ENCODE measurements at regions of chrX and their contacts with region 1.

Region 1: DNA sequence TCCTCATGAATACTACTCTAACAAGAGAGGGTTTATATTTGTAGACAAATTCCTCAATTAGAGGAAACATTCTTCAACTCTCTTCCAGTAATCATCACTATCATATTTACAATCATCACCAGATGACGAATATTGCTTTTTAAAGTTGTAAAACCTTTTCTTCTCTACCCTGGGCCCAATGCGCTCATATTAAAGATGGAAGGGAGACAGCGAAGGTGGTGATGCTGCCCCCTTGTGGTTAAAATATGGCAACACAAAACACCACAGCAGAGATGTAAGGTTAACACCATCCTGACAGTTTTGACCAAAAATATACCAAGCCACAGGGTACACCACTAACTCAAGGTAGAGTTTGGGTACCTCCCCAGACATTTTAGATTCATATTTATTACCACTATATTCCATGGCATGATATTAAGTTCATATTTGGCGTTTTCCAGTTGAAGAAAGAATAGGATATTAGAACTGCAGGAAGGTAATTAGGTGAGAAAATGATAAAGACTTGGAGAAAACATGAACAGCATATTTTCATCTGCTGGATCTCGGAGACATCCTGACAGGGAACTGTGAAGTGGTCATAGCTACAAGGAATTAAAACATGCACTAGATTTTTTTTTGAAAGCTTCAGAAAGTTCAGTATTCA is 72.8 kb downstream of the SLC9A7 start:
- DNase-seq: peak; percentile 34 to 36
- H3K4me3 ChIP-seq: no peak overlapping the region
- H3K4me3 Mint-ChIP-seq: no peak overlapping the region
- H3K27ac Mint-ChIP-seq: no peak overlapping the region
- H3K4me1 ChIP-seq: no peaks in the 10 kb centered on the region
- H3K4me1 Mint-ChIP-seq: no peaks in the 10 kb centered on the region
- H3K27me3 ChIP-seq: no peaks in the 10 kb centered on the region
- H3K27me3 Mint-ChIP-seq: no peaks in the 10 kb centered on the region
- CTCF ChIP-seq: peak; percentile 41 to 44

Region 2: GRCh38 chrX:46739736-46740135 is 53.6 kb after region 1 on chrX:
- CTCF ChIA-PET with region 1: no interaction called
- POLR2A ChIA-PET with region 1: no interaction called
- intact Hi-C with region 1: loop called (anchors 10 kb)
- DNase-seq: no peak
- H3K4me3 ChIP-seq: no peak overlapping the region
- H3K4me3 Mint-ChIP-seq: no peak overlapping the region
- H3K27ac Mint-ChIP-seq: no peak overlapping the region
- H3K4me1 ChIP-seq: no peaks in the 10 kb centered on the region
- H3K4me1 Mint-ChIP-seq: peaks cover 6% of the 10 kb centered on the region
- H3K27me3 ChIP-seq: no peaks in the 10 kb centered on the region
- H3K27me3 Mint-ChIP-seq: no peaks in the 10 kb centered on the region
- CTCF ChIP-seq: no peak

Measured in Caco-2 (cell line).